Activated CD4-positive, alpha-beta T cell treated with anti-CD3 and anti-CD28 coated beads for 36 hours (primary cell): ENCODE measurements at regions of chr15 and their contacts with region 1.

Region 1: DNA sequence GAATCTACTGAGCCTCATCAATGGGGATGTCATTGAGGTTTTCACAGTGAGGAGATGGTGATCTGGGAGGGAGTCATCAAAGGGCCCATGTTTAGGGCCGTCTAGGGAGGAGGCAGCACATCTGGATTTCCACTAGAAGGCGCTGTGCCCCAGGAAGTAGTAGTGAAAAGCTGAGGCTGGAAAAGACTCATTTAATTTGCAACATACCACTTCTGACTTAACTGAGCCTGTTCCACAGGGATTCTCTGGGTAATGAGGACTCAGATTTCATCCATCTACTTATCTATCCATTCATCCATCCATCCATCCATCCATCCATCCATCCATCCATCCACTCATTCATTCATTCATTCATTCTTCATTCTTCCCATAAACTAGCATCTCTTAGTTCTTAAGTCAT is 17.4 kb upstream of the SHF start:
- DNase-seq: peak; percentile 86
- ATAC-seq: peak; percentile 63
- H3K4me3 Mint-ChIP-seq: no peak overlapping the region
- H3K27ac Mint-ChIP-seq: no peak overlapping the region
- H3K4me1 Mint-ChIP-seq: peaks cover 7% of the 10 kb centered on the region
- H3K27me3 Mint-ChIP-seq: peaks cover 2% of the 10 kb centered on the region

Region 2: GRCh38 chr15:45187894-45188830 is 17.0 kb before region 1 on chr15 and contains the start of gene SHF:
- CTCF ChIA-PET with region 1: interaction called, 16 read pairs
- POLR2A ChIA-PET with region 1: interaction called, 10 read pairs
- intact Hi-C with region 1: no loop called
- DNase-seq: peak; percentile 90
- ATAC-seq: peak; percentile 82
- H3K4me3 Mint-ChIP-seq: peak within 1 kb of the TSS; percentile 85
- H3K27ac Mint-ChIP-seq: peak within 1 kb of the TSS; percentile 98
- H3K4me1 Mint-ChIP-seq: peaks cover 28% of the 10 kb centered on the region
- H3K27me3 Mint-ChIP-seq: no peaks in the 10 kb centered on the region
- total RNA-seq, gene SHF: 17.9 to 18.7 TPM

Region 3: GRCh38 chr15:45674677-45675076 is 469.5 kb after region 1 on chr15:
- CTCF ChIA-PET with region 1: no interaction called
- POLR2A ChIA-PET with region 1: no interaction called
- intact Hi-C with region 1: no loop called
- DNase-seq: no peak
- ATAC-seq: no peak
- H3K4me3 Mint-ChIP-seq: no peak overlapping the region
- H3K27ac Mint-ChIP-seq: no peak overlapping the region
- H3K4me1 Mint-ChIP-seq: no peaks in the 10 kb centered on the region
- H3K27me3 Mint-ChIP-seq: no peaks in the 10 kb centered on the region